Prostate gland (tissue), 2 donors: ENCODE measurements at regions of chr3 and their contacts with region 1.

Region 1: DNA sequence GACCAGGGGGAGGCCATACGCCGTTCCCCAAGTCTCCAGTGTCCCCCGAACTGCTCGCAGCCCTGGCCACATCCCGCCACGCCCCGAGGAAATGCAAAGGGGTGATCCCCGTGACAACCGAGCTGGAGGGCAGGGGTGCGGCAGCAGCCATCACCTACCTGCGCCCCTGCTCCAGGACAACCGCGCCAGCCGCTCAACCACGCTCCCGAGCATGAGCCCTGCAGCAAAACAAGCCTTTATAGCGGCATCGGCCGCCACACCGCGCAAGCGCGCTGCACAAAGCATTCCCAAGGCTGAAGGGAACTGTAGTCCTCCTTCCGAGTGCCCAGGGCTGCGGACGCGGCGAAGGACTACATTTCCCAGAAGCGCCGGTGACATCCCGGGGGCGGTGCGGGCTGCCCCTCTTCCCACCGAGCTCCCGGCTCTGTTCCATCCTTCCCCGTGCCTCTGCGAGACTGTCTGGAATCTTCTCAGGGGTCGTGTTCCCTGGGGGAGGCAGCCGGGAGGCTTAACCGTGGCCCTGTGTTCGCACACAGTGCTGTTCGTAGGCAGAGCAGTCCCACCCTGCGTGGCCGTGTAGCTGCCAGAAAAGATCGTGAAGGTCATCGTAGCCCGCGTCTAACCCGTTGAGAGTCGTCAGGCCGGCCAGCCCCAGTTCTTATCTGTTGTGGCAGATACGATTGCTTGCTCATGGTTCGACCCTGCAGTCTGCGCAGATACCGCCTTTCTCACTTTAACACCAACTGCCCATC is at the start of gene ABCC5:
- DNase-seq: peak; percentile 89
- H3K4me3 ChIP-seq: peak within 1 kb of the TSS; percentile 95 to 100
- H3K27ac ChIP-seq: peak within 1 kb of the TSS; percentile 73 to 75
- H3K4me1 ChIP-seq: no peaks in the 10 kb centered on the region
- H3K27me3 ChIP-seq: no peaks in the 10 kb centered on the region
- CTCF ChIP-seq: peak in 2 of 4 experiments; percentile 47 to 52
- POLR2A ChIP-seq: peak; percentile 31
- total RNA-seq, gene ABCC5: 17.9 to 43.6 TPM

Region 2: DNA sequence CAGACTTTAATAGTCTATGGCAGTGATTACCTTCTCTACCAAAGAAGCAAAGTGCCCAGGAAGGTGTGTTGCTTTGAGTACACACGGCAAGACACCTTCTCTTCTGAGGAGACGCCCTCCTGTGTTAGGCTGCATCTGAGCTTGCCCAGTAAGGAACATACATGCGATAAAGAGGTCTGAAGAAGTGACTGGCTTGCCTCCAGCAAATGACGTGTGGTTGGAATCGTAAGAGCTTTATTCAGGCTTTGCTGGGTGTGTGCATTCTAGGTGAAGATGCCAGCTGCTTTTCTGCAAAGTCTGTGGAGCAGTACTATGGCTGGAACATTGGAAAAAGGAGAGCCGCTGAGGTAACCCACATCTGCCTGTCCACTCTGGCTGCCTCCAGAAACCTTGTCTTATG is 214.9 kb before region 1 on chr3:
- intact Hi-C with region 1: no loop called
- DNase-seq: no peak
- H3K4me3 ChIP-seq: no peak overlapping the region
- H3K27ac ChIP-seq: no peak overlapping the region
- H3K4me1 ChIP-seq: no peaks in the 10 kb centered on the region
- H3K27me3 ChIP-seq: no peaks in the 10 kb centered on the region
- CTCF ChIP-seq: no peak
- POLR2A ChIP-seq: no peak

Region 3: GRCh38 chr3:184250167-184250828 is 232.4 kb after region 1 on chr3:
- intact Hi-C with region 1: loop called (anchors 10 kb)
- DNase-seq: peak; percentile 89
- H3K4me3 ChIP-seq: peak overlapping the region; percentile 81 to 97
- H3K27ac ChIP-seq: peak overlapping the region; percentile 20 to 77
- H3K4me1 ChIP-seq: no peaks in the 10 kb centered on the region
- H3K27me3 ChIP-seq: no peaks in the 10 kb centered on the region
- CTCF ChIP-seq: peak; percentile 82 to 87 (median 85)
- POLR2A ChIP-seq: no peak